ENCODE measurements at regions of chr10 and their contacts with region 1.

Region 1: GRCh38 chr10:111344804-111345203 is 268.0 kb downstream of the ADRA2A start:
- ATAC-seq: peak in 5 of 8 experiments; percentile 45 to 83 (median 60)
- H3K4me3 ChIP-seq: no peak overlapping the region
- H3K27ac ChIP-seq: no peak overlapping the region
- H3K4me1 ChIP-seq: no peaks in the 10 kb centered on the region

Region 2: GRCh38 chr10:111076191-111076681 is 268.6 kb before region 1 on chr10:
- in situ Hi-C with region 1: loop called in 1 of 9 experiments (anchors 25 kb)
- ATAC-seq: peak; percentile 71 to 83 (median 80)
- H3K4me3 ChIP-seq: peak overlapping the region; percentile 36 to 50 (median 45)
- H3K27ac ChIP-seq: no peak overlapping the region
- H3K4me1 ChIP-seq: peaks cover 0 to 6% of the 10 kb centered on the region in 2 donors

Region 3: DNA sequence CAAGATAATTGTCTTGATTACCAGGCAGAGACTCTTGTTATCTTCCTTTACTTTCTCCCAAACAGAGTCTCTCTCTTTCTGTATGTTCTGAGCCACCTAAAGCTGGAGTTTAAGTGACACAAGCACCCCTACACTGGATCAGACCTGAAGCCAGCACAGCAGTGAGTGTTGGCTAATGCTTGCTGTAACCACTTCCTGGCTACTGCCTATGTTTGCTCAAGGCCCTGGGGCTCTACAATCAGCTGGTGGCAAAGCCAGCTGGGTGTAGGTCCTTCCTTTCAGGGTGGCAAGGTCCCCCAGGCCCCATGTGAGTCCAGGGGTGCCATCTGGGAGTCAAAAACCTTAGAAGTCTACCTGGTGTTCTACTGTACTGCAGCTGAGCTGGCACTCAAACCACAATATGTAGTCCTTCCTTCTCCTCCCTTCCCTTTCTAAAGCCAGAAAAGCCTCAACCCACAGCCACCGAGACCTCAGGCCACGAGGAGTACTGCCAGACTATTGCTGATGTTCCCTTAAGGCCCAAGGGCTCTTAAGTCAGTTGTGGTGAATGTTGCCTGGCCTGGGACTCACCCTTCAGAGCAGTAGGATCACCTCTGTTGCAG is 148.3 kb after region 1 on chr10:
- in situ Hi-C with region 1: no loop called
- ATAC-seq: no peak
- H3K4me3 ChIP-seq: no peak overlapping the region
- H3K27ac ChIP-seq: no peak overlapping the region
- H3K4me1 ChIP-seq: no peaks in the 10 kb centered on the region

Region 4: GRCh38 chr10:111648046-111648445 is 303.2 kb after region 1 on chr10:
- in situ Hi-C with region 1: no loop called
- ATAC-seq: peak in 3 of 8 experiments; percentile 26 to 77 (median 71)
- H3K4me3 ChIP-seq: no peak overlapping the region
- H3K27ac ChIP-seq: no peak overlapping the region
- H3K4me1 ChIP-seq: peaks cover 0 to 34% of the 10 kb centered on the region in 2 donors

Measured in motor neuron (in vitro differentiated cells).